B cell (primary cell): ENCODE measurements at regions of chr5 and their contacts with region 1.

Region 1: GRCh38 chr5:69113851-69114250 is 20.0 kb downstream of the SLC30A5 start:
- DNase-seq: no peak
- ATAC-seq: no peak
- H3K4me3 ChIP-seq: no peak overlapping the region
- H3K4me3 Mint-ChIP-seq: no peak overlapping the region
- H3K27ac ChIP-seq: no peak overlapping the region
- H3K27ac Mint-ChIP-seq: no peak overlapping the region
- H3K4me1 ChIP-seq: no peaks in the 10 kb centered on the region
- H3K4me1 Mint-ChIP-seq: no peaks in the 10 kb centered on the region
- H3K27me3 ChIP-seq: no peaks in the 10 kb centered on the region
- H3K27me3 Mint-ChIP-seq: no peaks in the 10 kb centered on the region
- CTCF ChIP-seq: no peak

Region 2: GRCh38 chr5:68699966-68700365 is 413.9 kb before region 1 on chr5:
- CTCF ChIA-PET with region 1: no interaction called
- POLR2A ChIA-PET with region 1: no interaction called
- intact Hi-C with region 1: no loop called
- DNase-seq: no peak
- ATAC-seq: no peak
- H3K4me3 ChIP-seq: no peak overlapping the region
- H3K4me3 Mint-ChIP-seq: no peak overlapping the region
- H3K27ac ChIP-seq: no peak overlapping the region
- H3K27ac Mint-ChIP-seq: no peak overlapping the region
- H3K4me1 ChIP-seq: no peaks in the 10 kb centered on the region
- H3K4me1 Mint-ChIP-seq: peaks cover 8% of the 10 kb centered on the region
- H3K27me3 ChIP-seq: no peaks in the 10 kb centered on the region
- H3K27me3 Mint-ChIP-seq: no peaks in the 10 kb centered on the region
- CTCF ChIP-seq: no peak

Region 3: DNA sequence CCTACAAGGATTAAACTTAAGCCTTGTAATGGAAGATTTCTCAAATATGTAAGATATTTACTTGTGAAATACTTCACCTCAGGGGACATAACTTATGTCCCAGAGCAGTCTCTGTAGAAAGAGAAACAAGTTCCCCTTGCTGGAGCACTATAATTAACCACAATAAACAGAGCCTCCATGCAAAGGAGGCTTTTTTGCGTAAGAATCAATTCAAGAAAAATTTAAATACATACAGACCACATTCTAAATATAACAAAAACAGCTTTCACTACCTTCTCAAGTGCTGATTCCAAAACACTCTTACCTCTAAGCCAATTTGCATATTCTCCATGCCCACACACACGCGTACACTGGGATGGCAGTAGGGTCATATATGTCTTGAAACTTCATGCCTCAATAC is 22.4 kb after region 1 on chr5:
- CTCF ChIA-PET with region 1: no interaction called
- POLR2A ChIA-PET with region 1: interaction called, 11 read pairs
- intact Hi-C with region 1: no loop called
- DNase-seq: peak; percentile 64
- ATAC-seq: peak; percentile 87
- H3K4me3 ChIP-seq: no peak overlapping the region
- H3K4me3 Mint-ChIP-seq: peak overlapping the region; percentile 63
- H3K27ac ChIP-seq: peak overlapping the region; percentile 41 to 45
- H3K27ac Mint-ChIP-seq: peak overlapping the region; percentile 90
- H3K4me1 ChIP-seq: peaks cover 5 to 18% of the 10 kb centered on the region in 2 donors
- H3K4me1 Mint-ChIP-seq: peaks cover 29% of the 10 kb centered on the region
- H3K27me3 ChIP-seq: no peaks in the 10 kb centered on the region
- H3K27me3 Mint-ChIP-seq: no peaks in the 10 kb centered on the region
- CTCF ChIP-seq: no peak